Endothelial cell of umbilical vein (primary cell): ENCODE measurements at regions of chr2 and their contacts with region 1.

Region 1: GRCh38 chr2:180125245-180125962 is 118.3 kb upstream of the CWC22 start:
- DNase-seq: peak; percentile 80
- H3K4me3 ChIP-seq: no peak overlapping the region
- H3K27ac ChIP-seq: no peak overlapping the region
- H3K4me1 ChIP-seq: no peaks in the 10 kb centered on the region
- H3K27me3 ChIP-seq: peaks cover 4 to 12% of the 10 kb centered on the region in 2 experiments
- CTCF ChIP-seq: peak; percentile 38 to 55
- POLR2A ChIP-seq: no peak

Region 2: GRCh38 chr2:180143633-180144337 is 18.4 kb after region 1 on chr2:
- CTCF ChIA-PET with region 1: no interaction called
- POLR2A ChIA-PET with region 1: no interaction called
- dilution Hi-C with region 1: no loop called
- intact Hi-C with region 1: no loop called
- DNase-seq: no peak
- H3K4me3 ChIP-seq: no peak overlapping the region
- H3K27ac ChIP-seq: no peak overlapping the region
- H3K4me1 ChIP-seq: no peaks in the 10 kb centered on the region
- H3K27me3 ChIP-seq: no peaks in the 10 kb centered on the region
- CTCF ChIP-seq: no peak
- POLR2A ChIP-seq: no peak

Region 3: GRCh38 chr2:181058378-181059269 is 933.2 kb after region 1 on chr2:
- CTCF ChIA-PET with region 1: interaction called, 121 read pairs
- POLR2A ChIA-PET with region 1: no interaction called
- dilution Hi-C with region 1: no loop called
- intact Hi-C with region 1: loop called (anchors 1 kb)
- DNase-seq: peak; percentile 53
- H3K4me3 ChIP-seq: no peak overlapping the region
- H3K27ac ChIP-seq: no peak overlapping the region
- H3K4me1 ChIP-seq: no peaks in the 10 kb centered on the region
- H3K27me3 ChIP-seq: no peaks in the 10 kb centered on the region
- CTCF ChIP-seq: peak; percentile 35 to 43
- POLR2A ChIP-seq: no peak

Region 4: GRCh38 chr2:181070119-181070835 is 944.9 kb after region 1 on chr2:
- CTCF ChIA-PET with region 1: interaction called, 7 read pairs
- POLR2A ChIA-PET with region 1: no interaction called
- dilution Hi-C with region 1: no loop called
- intact Hi-C with region 1: loop called (anchors 5 kb)
- DNase-seq: peak; percentile 73
- H3K4me3 ChIP-seq: no peak overlapping the region
- H3K27ac ChIP-seq: no peak overlapping the region
- H3K4me1 ChIP-seq: peaks cover 47% of the 10 kb centered on the region
- H3K27me3 ChIP-seq: no peaks in the 10 kb centered on the region
- CTCF ChIP-seq: no peak
- POLR2A ChIP-seq: no peak

Region 5: GRCh38 chr2:181457121-181457740 is 1331.8 kb after region 1 on chr2 and contains the start of gene ITGA4:
- CTCF ChIA-PET with region 1: interaction called, 14 read pairs
- POLR2A ChIA-PET with region 1: no interaction called
- dilution Hi-C with region 1: no loop called
- intact Hi-C with region 1: loop called (anchors 1 kb)
- DNase-seq: peak; percentile 47
- H3K4me3 ChIP-seq: peak within 1 kb of the TSS; percentile 5 to 43 (median 41)
- H3K27ac ChIP-seq: no peak within 1 kb of the TSS
- H3K4me1 ChIP-seq: peaks cover 7% of the 10 kb centered on the region
- H3K27me3 ChIP-seq: peaks cover 15 to 53% of the 10 kb centered on the region in 2 experiments
- CTCF ChIP-seq: peak; percentile 65 to 76
- POLR2A ChIP-seq: no peak
- total RNA-seq, gene ITGA4: 2.8 TPM in 2 replicates

Region 6: DNA sequence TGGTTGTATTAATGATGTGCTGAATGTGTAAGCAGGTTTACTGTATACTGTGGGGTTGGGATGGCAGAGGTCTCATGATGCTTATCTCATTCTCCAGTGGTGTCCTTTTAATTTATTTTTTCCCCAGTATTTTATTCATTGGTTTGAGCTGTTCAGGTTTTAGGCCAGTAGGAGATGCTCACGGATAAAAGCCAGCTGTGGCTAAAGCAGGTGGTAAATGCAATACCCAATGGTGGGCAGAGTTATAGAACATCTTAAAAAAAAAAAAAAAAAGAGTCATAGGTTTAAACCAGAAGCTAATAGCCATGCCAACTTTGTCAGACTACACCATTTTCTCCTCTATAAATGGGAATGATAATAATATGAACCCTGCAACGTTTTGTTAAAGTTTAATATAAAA is 1612.7 kb after region 1 on chr2:
- CTCF ChIA-PET with region 1: interaction called, 10 read pairs
- POLR2A ChIA-PET with region 1: no interaction called
- dilution Hi-C with region 1: no loop called
- intact Hi-C with region 1: no loop called
- DNase-seq: peak; percentile 28
- H3K4me3 ChIP-seq: no peak overlapping the region
- H3K27ac ChIP-seq: no peak overlapping the region
- H3K4me1 ChIP-seq: peaks cover 2% of the 10 kb centered on the region
- H3K27me3 ChIP-seq: no peaks in the 10 kb centered on the region
- CTCF ChIP-seq: peak; percentile 19 to 20
- POLR2A ChIP-seq: no peak